ENCODE measurements at regions of chr22 and their contacts with region 1.

Region 1: GRCh38 chr22:41697126-41697775 is 2.1 kb upstream of the MEI1 start:
- DNase-seq: peak; percentile 93 to 94
- ATAC-seq: peak; percentile 78 to 93 (median 84)
- H3K4me3 ChIP-seq: peak overlapping the region in 7 of 10 donors; percentile 16 to 37 (median 34)
- H3K27ac ChIP-seq: peak overlapping the region in 9 of 10 donors; percentile 21 to 75 (median 62)
- H3K4me1 ChIP-seq: peaks cover 4 to 25% (median 19%) of the 10 kb centered on the region in 9 donors
- H3K27me3 ChIP-seq: no peaks in the 10 kb centered on the region
- CTCF ChIP-seq: peak; percentile 98 to 100 (median 99)

Region 2: GRCh38 chr22:41762980-41763779 is 65.9 kb after region 1 on chr22:
- intact Hi-C with region 1: no loop called
- DNase-seq: no peak
- ATAC-seq: no peak
- H3K4me3 ChIP-seq: no peak overlapping the region
- H3K27ac ChIP-seq: no peak overlapping the region
- H3K4me1 ChIP-seq: peaks cover 0 to 4% (median 0%) of the 10 kb centered on the region in 9 donors
- H3K27me3 ChIP-seq: peaks cover 0 to 8% (median 0%) of the 10 kb centered on the region in 7 donors
- CTCF ChIP-seq: peak in 6 of 9 donors; percentile 15 to 45 (median 34)

Region 3: DNA sequence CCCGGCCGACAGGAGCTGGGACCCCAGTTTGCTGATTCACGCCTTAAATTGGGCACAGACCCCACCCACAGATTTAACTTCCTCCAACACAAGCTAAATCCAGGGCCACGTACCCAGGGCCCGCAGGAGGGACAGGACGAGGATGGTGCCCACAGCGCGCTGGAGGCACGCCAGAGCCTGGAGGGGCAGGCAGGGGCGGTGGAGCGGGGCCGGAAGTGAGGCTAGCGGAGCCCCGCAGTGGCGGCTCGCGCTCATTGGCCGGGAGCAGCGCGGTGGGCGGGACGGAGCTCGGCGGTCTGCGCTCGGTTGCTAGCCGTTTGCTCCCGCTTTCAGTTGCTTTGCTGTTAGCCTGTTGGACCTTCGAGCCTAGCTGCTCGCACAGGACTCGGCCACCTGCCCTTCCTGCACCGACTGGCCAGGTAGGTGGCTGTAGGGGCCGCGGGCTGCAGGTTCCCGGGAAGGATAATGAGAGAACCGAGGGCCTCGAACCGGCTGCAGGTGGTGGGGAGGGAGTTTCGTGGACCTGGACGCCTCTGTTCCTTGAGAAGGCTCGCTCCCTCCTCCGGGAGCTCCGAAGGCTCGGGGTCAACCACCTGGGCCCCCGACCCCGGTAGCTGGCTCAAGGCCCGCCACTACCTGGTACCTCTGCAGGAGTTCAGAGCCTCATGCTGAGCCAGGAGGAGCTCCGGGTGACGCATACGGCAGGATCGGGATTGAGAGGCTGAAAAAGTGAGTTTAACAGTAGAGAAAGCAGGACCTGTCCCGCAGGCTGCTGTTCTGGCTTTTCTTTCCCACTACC is 103.3 kb after region 1 on chr22 and contains the start of gene CCDC134:
- intact Hi-C with region 1: loop called in 3 of 10 experiments (anchors 5 to 10 kb)
- DNase-seq: peak; percentile 90 to 95
- ATAC-seq: peak; percentile 97 to 99 (median 99)
- H3K4me3 ChIP-seq: peak within 1 kb of the TSS; percentile 54 to 100 (median 85)
- H3K27ac ChIP-seq: peak within 1 kb of the TSS; percentile 70 to 96 (median 91)
- H3K4me1 ChIP-seq: peaks cover 6 to 31% (median 22%) of the 10 kb centered on the region in 9 donors
- H3K27me3 ChIP-seq: no peaks in the 10 kb centered on the region
- CTCF ChIP-seq: no peak
- total RNA-seq, gene CCDC134: 2.6 to 7.3 (median 4.0) TPM

Region 4: GRCh38 chr22:41822317-41823060 is 125.2 kb after region 1 on chr22:
- intact Hi-C with region 1: loop called in 1 of 10 experiments (anchors 10 kb)
- DNase-seq: no peak
- ATAC-seq: peak in 1 of 8 donors; percentile 24
- H3K4me3 ChIP-seq: no peak overlapping the region
- H3K27ac ChIP-seq: no peak overlapping the region
- H3K4me1 ChIP-seq: peaks cover 12 to 28% (median 23%) of the 10 kb centered on the region in 9 donors
- H3K27me3 ChIP-seq: no peaks in the 10 kb centered on the region
- CTCF ChIP-seq: peak in 8 of 9 donors; percentile 24 to 69 (median 56)

Region 5: DNA sequence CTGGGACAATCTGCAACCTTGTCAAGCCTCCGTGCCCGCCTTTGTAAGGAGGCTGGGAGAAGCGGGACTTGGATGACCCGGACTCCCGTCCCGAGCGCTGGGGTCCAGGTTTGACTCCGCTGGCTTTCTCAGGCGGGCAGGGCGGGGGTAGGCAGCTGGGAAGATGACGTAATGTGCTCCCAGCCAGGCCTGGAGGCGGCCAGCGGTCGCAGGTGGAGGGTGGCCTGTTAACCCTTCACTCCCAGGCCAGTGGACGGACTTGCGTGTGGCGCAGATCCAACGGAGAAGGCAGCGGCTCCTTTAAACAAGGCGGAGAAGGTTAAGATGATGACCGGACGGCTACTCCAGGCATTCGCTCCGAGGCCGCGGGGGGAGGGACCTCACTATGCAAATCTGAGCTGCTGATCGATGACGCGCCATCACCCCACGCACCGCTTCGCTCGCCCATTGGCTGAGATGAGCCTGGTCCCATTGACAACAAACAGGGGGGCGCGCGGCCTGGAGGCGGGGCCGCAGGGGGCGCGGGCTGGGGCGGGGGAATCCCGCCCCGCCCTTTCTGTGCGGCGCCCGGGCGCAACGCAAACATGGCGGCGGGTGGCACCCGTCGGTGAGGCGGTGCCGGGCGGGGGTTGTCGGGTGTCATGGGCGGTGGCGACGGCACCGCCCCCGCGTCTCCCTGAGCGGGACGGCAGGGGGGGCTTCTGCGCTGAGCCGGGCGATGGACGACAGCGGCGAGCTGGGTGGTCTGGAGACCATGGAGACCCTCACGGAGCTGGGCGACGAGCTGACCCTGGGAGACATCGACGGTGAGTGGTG is 135.5 kb after region 1 on chr22 and contains the start of gene SREBF2:
- intact Hi-C with region 1: loop called in 2 of 10 experiments (anchors 10 kb)
- DNase-seq: peak; percentile 99 to 100
- ATAC-seq: peak; percentile 96 to 99 (median 98)
- H3K4me3 ChIP-seq: peak within 1 kb of the TSS; percentile 68 to 96 (median 92)
- H3K27ac ChIP-seq: peak within 1 kb of the TSS; percentile 82 to 98 (median 94)
- H3K4me1 ChIP-seq: peaks cover 3 to 37% (median 22%) of the 10 kb centered on the region in 9 donors
- H3K27me3 ChIP-seq: no peaks in the 10 kb centered on the region
- CTCF ChIP-seq: no peak
- total RNA-seq, gene SREBF2: 57.1 to 94.3 (median 75.8) TPM

Region 6: GRCh38 chr22:41940832-41941765 is 243.8 kb after region 1 on chr22:
- intact Hi-C with region 1: loop called (anchors 1 to 5 kb)
- DNase-seq: peak; percentile 82 to 84
- ATAC-seq: peak; percentile 85 to 94 (median 88)
- H3K4me3 ChIP-seq: no peak overlapping the region
- H3K27ac ChIP-seq: peak overlapping the region in 2 of 10 donors; percentile 5 to 85
- H3K4me1 ChIP-seq: peaks cover 0 to 34% (median 10%) of the 10 kb centered on the region in 9 donors
- H3K27me3 ChIP-seq: no peaks in the 10 kb centered on the region
- CTCF ChIP-seq: peak; percentile 80 to 98 (median 92)

Region 7: DNA sequence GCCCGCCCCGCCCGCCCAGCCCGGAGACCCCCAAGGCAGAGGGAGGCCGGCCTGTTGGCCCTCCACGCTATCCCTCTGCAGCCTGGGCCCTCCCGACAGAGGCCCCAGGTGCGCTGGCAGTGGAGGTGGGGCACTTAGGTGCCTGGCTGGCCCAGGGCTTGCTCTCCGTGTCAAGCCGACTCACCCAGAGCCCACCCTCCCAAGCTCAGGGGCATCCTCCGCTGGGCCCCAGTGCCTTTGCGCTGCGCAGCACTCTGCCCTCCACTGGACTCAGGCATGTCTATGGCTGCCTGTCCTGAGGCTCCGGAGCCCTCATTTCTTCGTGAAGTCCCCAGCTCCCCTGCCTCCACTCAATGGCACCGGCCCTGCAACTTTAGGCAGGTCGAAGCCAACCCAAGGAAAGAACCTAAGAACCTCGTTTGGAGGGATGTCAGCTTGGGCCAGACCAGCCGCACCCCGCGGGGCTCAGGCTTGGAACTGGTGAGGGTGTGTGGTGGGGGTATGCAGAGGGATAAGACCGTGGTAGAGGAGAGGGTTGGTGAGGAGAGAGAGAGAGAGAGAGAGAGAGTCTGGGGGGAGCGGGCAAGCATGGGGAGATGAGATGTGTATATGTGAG is 260.8 kb after region 1 on chr22:
- intact Hi-C with region 1: loop called in 1 of 10 experiments (anchors 5 kb)
- DNase-seq: no peak
- ATAC-seq: peak in 7 of 8 donors; percentile 3 to 48 (median 14)
- H3K4me3 ChIP-seq: peak overlapping the region in 6 of 10 donors; percentile 17 to 32 (median 28)
- H3K27ac ChIP-seq: no peak overlapping the region
- H3K4me1 ChIP-seq: peaks cover 0 to 15% (median 8%) of the 10 kb centered on the region in 9 donors
- H3K27me3 ChIP-seq: peaks cover 0 to 18% (median 8%) of the 10 kb centered on the region in 7 donors
- CTCF ChIP-seq: peak in 5 of 9 donors; percentile 2 to 43 (median 5)

Region 8: GRCh38 chr22:42079319-42080251 is 382.3 kb after region 1 on chr22 and contains the start of gene SMDT1:
- intact Hi-C with region 1: loop called in 1 of 10 experiments (anchors 10 kb)
- DNase-seq: peak; percentile 99 to 100
- ATAC-seq: peak; percentile 93 to 96 (median 94)
- H3K4me3 ChIP-seq: peak within 1 kb of the TSS; percentile 50 to 79 (median 66)
- H3K27ac ChIP-seq: peak within 1 kb of the TSS; percentile 92 to 100 (median 98)
- H3K4me1 ChIP-seq: peaks cover 5 to 63% (median 35%) of the 10 kb centered on the region in 9 donors
- H3K27me3 ChIP-seq: no peaks in the 10 kb centered on the region
- CTCF ChIP-seq: peak in 1 of 9 donors; percentile 5
- total RNA-seq, gene SMDT1: 111 to 193 (median 128) TPM

Measured in heart right ventricle (tissue), 16 donors.